Activated naive CD4-positive, alpha-beta T cell treated with anti-CD3 and anti-CD28 coated beads for 36 hours (primary cell): ENCODE measurements at regions of chr10 and their contacts with region 1.

Region 1: DNA sequence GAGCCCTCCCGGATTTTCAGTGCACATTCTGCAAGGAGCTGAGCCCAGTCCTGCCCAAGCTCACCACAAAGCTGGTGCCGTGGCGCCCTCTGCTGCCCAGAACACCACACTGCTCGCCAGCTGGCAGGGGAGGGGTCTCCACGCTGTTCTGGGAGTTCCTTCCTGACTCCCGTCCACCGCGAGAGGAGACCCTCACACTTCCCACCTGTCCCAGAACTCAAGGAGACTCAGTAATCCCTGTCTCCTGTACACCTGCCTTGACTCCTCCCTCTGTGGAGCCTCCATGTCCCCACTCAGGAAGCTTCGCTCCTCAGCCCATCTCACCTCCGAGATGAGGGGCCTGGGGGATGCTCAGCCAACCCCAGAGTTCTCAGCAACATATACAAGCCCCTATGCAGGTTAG is 11.3 kb downstream of the C10orf105 start:
- DNase-seq: peak; percentile 81
- H3K4me3 Mint-ChIP-seq: no peak overlapping the region
- H3K27ac Mint-ChIP-seq: no peak overlapping the region
- H3K4me1 Mint-ChIP-seq: peaks cover 36% of the 10 kb centered on the region
- H3K27me3 Mint-ChIP-seq: no peaks in the 10 kb centered on the region

Region 2: DNA sequence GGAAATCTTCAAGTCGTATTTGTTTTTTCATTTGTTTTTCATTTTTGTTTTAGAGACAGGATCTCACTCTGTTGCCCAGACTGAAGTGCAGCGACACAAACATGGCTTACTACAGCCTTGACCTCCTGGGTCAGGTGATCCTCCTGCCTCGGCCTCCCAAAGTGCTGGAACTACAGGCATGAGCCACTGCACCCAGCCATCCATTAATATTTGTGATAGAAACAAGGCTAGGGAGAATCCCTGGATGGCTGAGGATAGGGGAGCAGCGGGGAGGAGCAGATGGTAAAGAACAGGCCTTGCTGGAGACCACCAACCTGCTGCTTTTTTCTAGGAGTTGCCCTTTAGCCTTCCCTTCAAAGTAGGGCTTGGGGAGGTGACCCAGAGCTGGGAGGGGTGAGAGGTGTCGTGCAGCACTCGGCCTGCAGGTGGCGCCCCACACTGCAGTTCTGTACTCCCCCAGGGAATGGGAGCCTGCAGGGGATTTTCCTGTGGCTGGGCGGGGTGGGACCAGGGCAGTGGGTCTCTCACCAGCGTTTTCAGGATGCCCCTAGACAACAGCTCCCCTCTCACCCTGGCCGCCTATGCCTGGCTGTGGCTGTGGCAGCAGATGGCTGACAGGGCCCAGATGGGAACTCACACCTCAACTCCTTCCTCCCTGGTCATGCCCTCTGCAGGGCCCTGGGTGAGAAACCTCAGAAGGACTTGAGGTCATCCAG is 324.2 kb before region 1 on chr10:
- CTCF ChIA-PET with region 1: interaction called, 10 read pairs
- intact Hi-C with region 1: loop called (anchors 1 kb)
- DNase-seq: peak; percentile 84
- H3K4me3 Mint-ChIP-seq: no peak overlapping the region
- H3K27ac Mint-ChIP-seq: no peak overlapping the region
- H3K4me1 Mint-ChIP-seq: no peaks in the 10 kb centered on the region
- H3K27me3 Mint-ChIP-seq: no peaks in the 10 kb centered on the region

Region 3: GRCh38 chr10:71569775-71570588 is 138.3 kb before region 1 on chr10:
- CTCF ChIA-PET with region 1: interaction called, 4 read pairs
- intact Hi-C with region 1: loop called (anchors 1 kb)
- DNase-seq: peak; percentile 91
- H3K4me3 Mint-ChIP-seq: no peak overlapping the region
- H3K27ac Mint-ChIP-seq: no peak overlapping the region
- H3K4me1 Mint-ChIP-seq: no peaks in the 10 kb centered on the region
- H3K27me3 Mint-ChIP-seq: no peaks in the 10 kb centered on the region

Region 4: DNA sequence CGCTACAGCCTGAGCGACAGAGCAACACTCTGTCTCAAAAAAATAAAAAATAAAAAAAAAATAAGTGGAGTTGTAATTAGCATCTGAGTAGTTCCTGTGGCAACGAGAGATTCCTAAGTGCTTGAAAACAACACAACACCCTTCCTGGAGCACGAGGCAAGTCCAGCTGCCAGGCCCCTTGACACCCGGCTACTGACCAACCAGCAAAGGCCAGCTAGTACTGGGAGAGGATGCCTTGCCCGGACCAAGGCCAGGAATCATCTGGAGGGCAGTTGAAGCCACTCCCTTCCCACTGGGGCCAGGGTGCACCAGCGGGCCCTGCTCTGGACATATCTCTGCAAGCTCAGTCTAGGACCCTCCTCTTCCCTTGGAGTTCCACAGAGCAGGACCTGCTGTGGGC is 10.7 kb after region 1 on chr10:
- CTCF ChIA-PET with region 1: interaction called, 29 read pairs
- intact Hi-C with region 1: no loop called
- DNase-seq: no peak
- H3K4me3 Mint-ChIP-seq: no peak overlapping the region
- H3K27ac Mint-ChIP-seq: no peak overlapping the region
- H3K4me1 Mint-ChIP-seq: peaks cover 50% of the 10 kb centered on the region
- H3K27me3 Mint-ChIP-seq: no peaks in the 10 kb centered on the region

Region 5: GRCh38 chr10:71771821-71772617 is 63.7 kb after region 1 on chr10:
- CTCF ChIA-PET with region 1: interaction called, 36 read pairs
- intact Hi-C with region 1: loop called (anchors 1 kb)
- DNase-seq: peak; percentile 76
- H3K4me3 Mint-ChIP-seq: peak overlapping the region; percentile 88
- H3K27ac Mint-ChIP-seq: peak overlapping the region; percentile 98
- H3K4me1 Mint-ChIP-seq: peaks cover 73% of the 10 kb centered on the region
- H3K27me3 Mint-ChIP-seq: no peaks in the 10 kb centered on the region

Region 6: DNA sequence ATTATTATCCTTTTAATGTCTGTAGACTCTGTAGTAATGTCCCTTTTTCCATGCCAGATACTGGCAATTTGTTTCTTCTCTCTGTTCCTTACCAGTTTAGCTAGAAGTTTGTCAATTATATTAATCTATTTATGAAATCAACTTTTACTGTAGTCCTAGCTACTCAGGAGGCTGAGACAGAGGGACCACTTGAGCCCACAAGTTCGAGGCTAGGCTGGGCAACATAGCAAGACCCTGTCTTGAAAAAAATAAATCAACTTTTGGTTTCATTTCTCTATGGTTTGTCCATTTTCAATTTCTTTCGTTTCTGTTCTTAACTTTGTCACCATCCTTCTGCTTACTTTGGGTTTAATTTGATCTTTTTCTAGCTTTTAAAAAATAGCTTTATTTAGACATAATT is 1288.8 kb after region 1 on chr10:
- CTCF ChIA-PET with region 1: no interaction called
- intact Hi-C with region 1: no loop called
- DNase-seq: no peak
- H3K4me3 Mint-ChIP-seq: no peak overlapping the region
- H3K27ac Mint-ChIP-seq: no peak overlapping the region
- H3K4me1 Mint-ChIP-seq: no peaks in the 10 kb centered on the region
- H3K27me3 Mint-ChIP-seq: no peaks in the 10 kb centered on the region